ENCODE measurements at regions of chr11 and their contacts with region 1.

Region 1: DNA sequence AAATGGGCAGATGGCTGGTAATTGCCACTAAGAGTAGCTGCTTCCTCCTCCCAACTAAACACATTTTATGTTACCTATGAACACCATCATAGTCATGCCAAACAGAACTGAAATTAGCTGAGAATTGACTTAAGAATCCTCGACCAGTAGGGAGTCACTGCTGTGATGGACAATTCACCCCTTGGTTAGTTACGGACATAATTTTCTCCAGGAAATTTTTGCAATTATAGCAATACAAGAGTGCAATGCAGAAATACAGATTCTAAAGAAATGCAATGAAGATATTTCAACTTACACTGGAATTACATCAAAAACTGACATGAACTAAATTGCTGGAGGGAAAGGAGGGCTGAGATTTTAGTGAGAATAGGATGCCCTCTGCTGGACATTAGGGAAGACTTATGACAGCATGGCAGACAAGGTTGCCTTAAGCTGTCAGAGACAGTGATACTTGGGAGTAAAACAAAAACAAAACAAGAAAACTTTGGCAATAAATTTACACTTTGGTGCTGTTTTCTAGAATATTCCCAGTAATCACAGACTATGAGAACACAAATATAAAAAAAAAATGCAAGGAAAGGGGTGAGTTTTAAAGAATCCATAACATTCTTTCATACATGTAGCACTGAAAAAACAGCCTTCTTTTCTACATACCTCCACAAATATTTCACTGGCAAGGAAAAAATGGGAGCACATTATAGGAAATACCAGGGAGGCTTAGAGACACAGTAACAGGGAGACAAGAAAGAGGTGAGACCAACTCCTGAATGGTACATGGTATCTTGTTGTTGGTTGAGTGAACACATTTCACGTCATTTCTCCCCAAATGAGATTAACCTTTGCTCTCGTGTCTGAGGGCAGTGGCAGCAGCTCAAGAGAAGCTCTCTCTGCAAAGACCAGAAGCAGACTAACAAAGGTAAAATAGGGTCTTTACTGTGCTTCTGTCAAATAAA is 11.2 kb upstream of the PPP2R1B start:
- DNase-seq: peak; percentile 64

Region 2: GRCh38 chr11:111586388-111586831 is 191.0 kb before region 1 on chr11:
- CTCF ChIA-PET with region 1: interaction called, 10 read pairs
- POLR2A ChIA-PET with region 1: no interaction called
- DNase-seq: peak; percentile 32

Region 3: GRCh38 chr11:111766093-111766833 is 11.1 kb before region 1 on chr11 and contains the start of gene PPP2R1B:
- CTCF ChIA-PET with region 1: interaction called, 13 read pairs
- POLR2A ChIA-PET with region 1: interaction called, 7 read pairs
- DNase-seq: peak; percentile 96

Region 4: GRCh38 chr11:111792314-111792713 is 14.9 kb after region 1 on chr11:
- CTCF ChIA-PET with region 1: interaction called, 10 read pairs
- POLR2A ChIA-PET with region 1: no interaction called
- DNase-seq: no peak

Measured in HEK293T (cell line).